ENCODE measurements at regions of chr12 and their contacts with region 1.

Region 1: GRCh38 chr12:45990468-45991283 is at the start of gene SCAF11:
- DNase-seq: peak; percentile 100
- ATAC-seq: peak; percentile 70
- H3K4me3 ChIP-seq: peak within 1 kb of the TSS; percentile 83
- H3K27ac ChIP-seq: peak within 1 kb of the TSS; percentile 95
- H3K4me1 ChIP-seq: peaks cover 21% of the 10 kb centered on the region
- H3K27me3 ChIP-seq: no peaks in the 10 kb centered on the region
- CTCF ChIP-seq: peak; percentile 94
- total RNA-seq, gene SCAF11: 75.7 and 92.0 TPM in 2 replicates

Region 2: DNA sequence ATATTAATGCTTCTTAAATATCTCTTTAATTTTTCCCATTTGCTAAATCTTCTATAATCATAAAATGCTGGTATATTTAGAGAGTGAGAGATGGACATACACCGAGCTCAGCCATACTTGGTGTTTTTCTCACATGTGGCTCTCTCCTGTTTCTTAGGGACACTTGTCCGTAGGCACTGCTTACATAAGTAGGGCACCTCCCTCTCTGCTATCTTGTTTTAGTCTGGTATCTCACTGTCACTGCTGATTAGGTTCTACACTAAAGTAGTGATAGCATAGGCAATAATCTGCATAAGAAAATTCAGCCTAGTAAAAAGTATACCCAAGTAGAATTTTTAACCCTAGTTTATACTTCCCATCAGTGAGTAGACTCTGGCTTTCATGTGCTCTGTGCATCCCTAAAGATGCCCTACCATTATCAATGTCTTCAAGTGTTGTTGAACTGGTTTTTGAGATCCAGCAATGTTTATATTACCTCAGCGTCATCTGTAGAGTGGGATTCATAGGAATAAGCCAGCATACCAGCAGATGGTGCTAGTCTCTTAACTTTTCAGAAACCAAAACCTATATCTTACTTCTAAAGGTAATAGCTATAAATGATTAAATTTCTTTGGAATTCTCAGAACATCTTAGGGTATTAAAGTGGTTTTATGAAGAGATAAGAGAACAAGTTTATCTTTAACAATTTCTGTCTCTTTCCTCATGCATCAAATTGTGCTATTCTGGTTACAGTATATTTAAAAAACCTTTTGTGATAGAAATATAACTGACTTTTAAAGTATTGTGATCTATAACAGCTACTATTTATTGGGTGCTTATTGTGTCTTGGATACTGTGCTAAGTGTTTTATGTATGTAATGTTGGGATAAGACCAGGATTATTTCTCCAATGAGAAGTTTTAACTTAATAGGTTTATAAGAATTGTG is 228.2 kb before region 1 on chr12:
- CTCF ChIA-PET with region 1: interaction called, 4 read pairs
- POLR2A ChIA-PET with region 1: no interaction called
- intact Hi-C with region 1: loop called (anchors 1 kb)
- DNase-seq: peak; percentile 76
- ATAC-seq: peak; percentile 89
- H3K4me3 ChIP-seq: no peak overlapping the region
- H3K27ac ChIP-seq: no peak overlapping the region
- H3K4me1 ChIP-seq: no peaks in the 10 kb centered on the region
- H3K27me3 ChIP-seq: no peaks in the 10 kb centered on the region
- CTCF ChIP-seq: peak; percentile 88

Region 3: GRCh38 chr12:46005151-46005797 is 14.6 kb after region 1 on chr12:
- CTCF ChIA-PET with region 1: no interaction called
- POLR2A ChIA-PET with region 1: no interaction called
- intact Hi-C with region 1: loop called (anchors 1 kb)
- DNase-seq: peak; percentile 34
- ATAC-seq: no peak; the same call in 1 of the 2 replicates
- H3K4me3 ChIP-seq: no peak overlapping the region
- H3K27ac ChIP-seq: no peak overlapping the region
- H3K4me1 ChIP-seq: no peaks in the 10 kb centered on the region
- H3K27me3 ChIP-seq: no peaks in the 10 kb centered on the region
- CTCF ChIP-seq: peak; percentile 73

Region 4: DNA sequence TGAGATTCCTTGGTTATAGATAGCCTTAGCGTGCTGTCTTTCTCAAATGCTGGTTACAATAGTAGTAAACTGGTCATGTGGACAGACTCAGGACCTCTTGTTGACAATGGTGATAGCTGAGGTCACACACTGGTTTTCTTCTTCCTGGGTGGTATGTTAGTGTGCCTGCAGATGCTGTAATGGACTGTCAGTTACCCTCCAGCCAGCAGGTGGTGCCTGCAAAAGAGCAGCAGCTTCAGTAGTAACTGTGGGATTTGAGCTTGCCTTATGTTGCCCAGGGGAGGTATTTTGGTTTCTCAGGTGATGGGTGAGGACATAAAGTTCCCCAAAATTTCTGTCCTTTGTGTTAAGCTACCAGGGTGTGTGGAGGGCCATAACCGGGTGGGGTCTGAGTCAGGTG is 33.4 kb after region 1 on chr12:
- CTCF ChIA-PET with region 1: no interaction called
- POLR2A ChIA-PET with region 1: no interaction called
- intact Hi-C with region 1: no loop called
- DNase-seq: no peak
- ATAC-seq: no peak
- H3K4me3 ChIP-seq: no peak overlapping the region
- H3K27ac ChIP-seq: no peak overlapping the region
- H3K4me1 ChIP-seq: no peaks in the 10 kb centered on the region
- H3K27me3 ChIP-seq: no peaks in the 10 kb centered on the region
- CTCF ChIP-seq: no peak

Region 5: GRCh38 chr12:46357438-46358324 is 367.0 kb after region 1 on chr12:
- CTCF ChIA-PET with region 1: no interaction called
- POLR2A ChIA-PET with region 1: no interaction called
- intact Hi-C with region 1: loop called (anchors 5 kb)
- DNase-seq: peak; percentile 39
- ATAC-seq: peak; percentile 46
- H3K4me3 ChIP-seq: no peak overlapping the region
- H3K27ac ChIP-seq: no peak overlapping the region
- H3K4me1 ChIP-seq: no peaks in the 10 kb centered on the region
- H3K27me3 ChIP-seq: no peaks in the 10 kb centered on the region
- CTCF ChIP-seq: no peak

Region 6: DNA sequence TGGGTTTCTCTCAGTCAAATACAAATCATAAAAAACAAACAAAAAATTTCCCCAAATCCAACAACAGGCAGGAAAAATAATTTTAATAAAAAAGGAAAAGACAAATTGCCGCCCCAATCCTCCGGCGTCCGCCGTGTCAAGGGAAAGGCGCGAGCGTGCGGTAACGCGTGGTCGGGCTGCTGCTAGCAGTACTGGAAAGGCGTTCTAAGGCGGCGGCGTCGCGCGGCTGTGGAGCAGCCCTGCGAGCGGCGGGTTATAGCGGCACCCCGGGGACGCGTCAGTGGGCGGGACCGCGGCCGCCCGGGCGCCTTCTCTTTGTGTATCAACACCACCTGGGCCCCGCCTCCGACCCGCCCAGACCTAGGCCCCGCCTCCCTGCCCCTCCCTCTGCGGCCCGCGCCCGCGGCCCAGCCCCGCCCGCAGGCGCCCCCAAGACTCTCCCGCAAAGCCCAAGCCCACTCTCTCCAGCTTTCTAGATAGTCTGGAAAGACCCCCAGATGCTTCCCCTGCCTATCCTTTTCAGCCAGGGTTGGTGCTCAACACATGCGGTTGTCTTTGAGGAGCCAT is 382.0 kb after region 1 on chr12 and contains the start of gene SLC38A2:
- CTCF ChIA-PET with region 1: no interaction called
- POLR2A ChIA-PET with region 1: no interaction called
- intact Hi-C with region 1: loop called (anchors 2 kb)
- DNase-seq: peak; percentile 93
- ATAC-seq: peak; percentile 85
- H3K4me3 ChIP-seq: peak within 1 kb of the TSS; percentile 83
- H3K27ac ChIP-seq: peak within 1 kb of the TSS; percentile 80
- H3K4me1 ChIP-seq: peaks cover 40% of the 10 kb centered on the region
- H3K27me3 ChIP-seq: no peaks in the 10 kb centered on the region
- CTCF ChIP-seq: no peak
- total RNA-seq, gene SLC38A2: 214 and 232 TPM in 2 replicates